ENCODE measurements at regions of chr7 and their contacts with region 1.

Region 1: GRCh38 chr7:131688738-131689661 is 132.6 kb upstream of the PODXL start:
- DNase-seq: peak; percentile 69
- H3K4me3 Mint-ChIP-seq: no peak overlapping the region
- H3K27ac Mint-ChIP-seq: no peak overlapping the region
- H3K4me1 Mint-ChIP-seq: no peaks in the 10 kb centered on the region
- H3K27me3 Mint-ChIP-seq: peaks cover 42% of the 10 kb centered on the region

Region 2: GRCh38 chr7:131699323-131699722 is 10.3 kb after region 1 on chr7:
- CTCF ChIA-PET with region 1: interaction called, 11 read pairs
- POLR2A ChIA-PET with region 1: no interaction called
- intact Hi-C with region 1: no loop called
- DNase-seq: no peak
- H3K4me3 Mint-ChIP-seq: no peak overlapping the region
- H3K27ac Mint-ChIP-seq: no peak overlapping the region
- H3K4me1 Mint-ChIP-seq: no peaks in the 10 kb centered on the region
- H3K27me3 Mint-ChIP-seq: peaks cover 5% of the 10 kb centered on the region

Region 3: DNA sequence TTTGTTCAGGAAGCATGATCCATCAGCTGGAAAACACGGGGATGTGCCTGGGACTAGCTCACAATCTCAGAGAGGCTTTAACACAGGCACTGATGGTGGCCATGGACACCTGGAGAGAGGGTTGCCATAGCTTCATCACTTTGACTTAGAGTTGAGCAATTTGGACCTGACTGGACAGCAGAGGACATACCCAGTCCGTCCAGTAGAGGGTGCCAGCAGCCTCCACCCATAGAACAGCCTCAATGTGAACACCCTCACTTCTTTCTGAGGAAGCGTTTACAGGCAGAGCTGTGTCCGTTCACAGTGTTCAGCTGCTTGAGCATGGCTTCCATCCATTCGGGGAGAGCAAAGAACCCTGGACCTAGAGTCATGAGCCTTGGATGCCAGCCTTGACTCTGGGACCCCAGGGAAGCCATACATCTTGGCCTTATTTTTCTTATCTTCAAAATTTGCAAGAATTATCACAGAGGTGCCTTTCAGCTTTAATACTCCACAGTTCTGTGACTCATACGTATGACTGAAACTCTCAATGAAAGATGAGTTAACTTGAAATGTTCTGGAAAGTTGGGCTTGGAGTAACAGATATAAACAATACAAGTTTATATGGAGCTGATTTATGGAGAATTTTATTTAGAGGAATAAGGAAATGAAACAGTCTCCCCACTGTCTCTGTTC is 170.3 kb after region 1 on chr7:
- CTCF ChIA-PET with region 1: interaction called, 14 read pairs
- POLR2A ChIA-PET with region 1: no interaction called
- intact Hi-C with region 1: no loop called
- DNase-seq: peak; percentile 60
- H3K4me3 Mint-ChIP-seq: no peak overlapping the region
- H3K27ac Mint-ChIP-seq: no peak overlapping the region
- H3K4me1 Mint-ChIP-seq: no peaks in the 10 kb centered on the region
- H3K27me3 Mint-ChIP-seq: peaks cover 3% of the 10 kb centered on the region

Region 4: GRCh38 chr7:132049462-132050304 is 360.7 kb after region 1 on chr7:
- CTCF ChIA-PET with region 1: interaction called, 10 read pairs
- POLR2A ChIA-PET with region 1: no interaction called
- intact Hi-C with region 1: loop called (anchors 2 kb)
- DNase-seq: peak; percentile 38
- H3K4me3 Mint-ChIP-seq: no peak overlapping the region
- H3K27ac Mint-ChIP-seq: no peak overlapping the region
- H3K4me1 Mint-ChIP-seq: no peaks in the 10 kb centered on the region
- H3K27me3 Mint-ChIP-seq: peaks cover 4% of the 10 kb centered on the region